ENCODE measurements at regions of chrX and their contacts with region 1.

Region 1: DNA sequence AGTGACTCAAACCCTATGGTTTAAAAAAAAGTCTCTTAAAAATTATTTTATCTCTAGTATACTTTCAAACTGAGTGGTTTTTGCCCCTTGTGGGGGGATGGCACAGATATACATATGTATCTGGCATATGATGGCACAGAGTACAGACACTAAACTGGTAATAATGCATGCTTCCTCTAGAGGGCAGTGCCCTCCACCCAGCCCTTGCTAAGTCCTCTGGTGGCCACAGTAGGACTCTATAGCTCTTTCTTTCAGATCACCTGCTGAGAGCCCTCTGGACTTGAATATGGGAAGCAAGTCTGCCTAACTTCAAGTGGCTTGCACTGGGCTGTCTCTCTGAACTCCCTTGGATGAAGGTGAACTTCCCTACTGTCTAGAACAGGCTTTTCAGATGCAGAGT is 66.3 kb downstream of the TSPAN7 start:
- ATAC-seq: peak in 3 of 8 experiments; percentile 71 to 78 (median 76)
- H3K4me3 ChIP-seq: no peak overlapping the region
- H3K27ac ChIP-seq: no peak overlapping the region
- H3K4me1 ChIP-seq: no peaks in the 10 kb centered on the region

Region 2: GRCh38 chrX:38327007-38327774 is 300.5 kb before region 1 on chrX and contains the start of gene RPGR:
- in situ Hi-C with region 1: loop called in 2 of 9 experiments (anchors 25 kb)
- ATAC-seq: peak; percentile 89 to 98 (median 98)
- H3K4me3 ChIP-seq: peak within 1 kb of the TSS; percentile 48 to 87 (median 70)
- H3K27ac ChIP-seq: peak within 1 kb of the TSS in 1 of 2 donors; percentile 53
- H3K4me1 ChIP-seq: no peaks in the 10 kb centered on the region
- total RNA-seq, gene RPGR: 3.6 to 25.7 (median 6.0) TPM

Region 3: DNA sequence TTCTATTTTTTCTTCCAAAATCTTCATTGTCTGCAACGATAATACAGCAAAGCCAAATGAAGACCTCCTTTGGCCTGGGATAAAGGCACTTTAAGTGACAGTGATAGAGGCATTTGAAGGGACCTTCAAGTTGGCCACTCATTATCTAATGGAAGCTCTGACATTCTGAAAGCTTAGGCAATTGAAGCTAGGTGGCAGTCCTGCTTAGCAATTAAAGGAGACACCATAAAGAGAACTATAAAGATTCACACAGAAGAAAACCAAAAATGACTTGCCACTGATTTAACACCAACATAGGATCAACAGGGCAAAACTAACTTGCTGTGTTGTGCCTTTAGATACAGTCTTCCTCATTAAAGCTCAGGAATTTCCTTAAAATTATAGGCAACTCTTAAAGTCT is 169.6 kb before region 1 on chrX:
- in situ Hi-C with region 1: loop called in 2 of 9 experiments (anchors 25 kb)
- ATAC-seq: peak in 3 of 8 experiments; percentile 44 to 55 (median 52)
- H3K4me3 ChIP-seq: no peak overlapping the region
- H3K27ac ChIP-seq: no peak overlapping the region
- H3K4me1 ChIP-seq: no peaks in the 10 kb centered on the region

Region 4: DNA sequence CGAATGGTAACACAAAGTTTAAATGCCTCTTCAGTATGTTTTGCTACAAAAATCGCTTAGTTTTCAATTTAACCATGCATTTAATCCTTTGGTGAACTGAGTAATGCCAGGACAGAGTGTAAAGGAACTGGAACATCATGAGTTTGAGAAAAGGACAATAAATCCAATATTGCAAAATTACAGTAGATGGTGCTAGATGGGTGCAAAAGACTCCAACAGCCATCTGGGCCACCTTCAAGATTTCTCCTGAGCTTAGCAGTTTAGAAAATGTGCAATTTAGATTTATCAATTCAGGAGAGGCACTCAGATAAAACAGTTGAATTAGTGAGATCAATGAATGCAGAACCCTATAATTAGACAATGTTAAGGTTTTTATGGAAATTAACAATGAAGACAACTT is 140.4 kb after region 1 on chrX:
- in situ Hi-C with region 1: no loop called
- ATAC-seq: peak in 4 of 8 experiments; percentile 27 to 54 (median 48)
- H3K4me3 ChIP-seq: no peak overlapping the region
- H3K27ac ChIP-seq: no peak overlapping the region
- H3K4me1 ChIP-seq: peaks cover 0 to 6% of the 10 kb centered on the region in 2 donors

Measured in motor neuron (in vitro differentiated cells).